ENCODE measurements at regions of chr2 and their contacts with region 1.

Region 1: DNA sequence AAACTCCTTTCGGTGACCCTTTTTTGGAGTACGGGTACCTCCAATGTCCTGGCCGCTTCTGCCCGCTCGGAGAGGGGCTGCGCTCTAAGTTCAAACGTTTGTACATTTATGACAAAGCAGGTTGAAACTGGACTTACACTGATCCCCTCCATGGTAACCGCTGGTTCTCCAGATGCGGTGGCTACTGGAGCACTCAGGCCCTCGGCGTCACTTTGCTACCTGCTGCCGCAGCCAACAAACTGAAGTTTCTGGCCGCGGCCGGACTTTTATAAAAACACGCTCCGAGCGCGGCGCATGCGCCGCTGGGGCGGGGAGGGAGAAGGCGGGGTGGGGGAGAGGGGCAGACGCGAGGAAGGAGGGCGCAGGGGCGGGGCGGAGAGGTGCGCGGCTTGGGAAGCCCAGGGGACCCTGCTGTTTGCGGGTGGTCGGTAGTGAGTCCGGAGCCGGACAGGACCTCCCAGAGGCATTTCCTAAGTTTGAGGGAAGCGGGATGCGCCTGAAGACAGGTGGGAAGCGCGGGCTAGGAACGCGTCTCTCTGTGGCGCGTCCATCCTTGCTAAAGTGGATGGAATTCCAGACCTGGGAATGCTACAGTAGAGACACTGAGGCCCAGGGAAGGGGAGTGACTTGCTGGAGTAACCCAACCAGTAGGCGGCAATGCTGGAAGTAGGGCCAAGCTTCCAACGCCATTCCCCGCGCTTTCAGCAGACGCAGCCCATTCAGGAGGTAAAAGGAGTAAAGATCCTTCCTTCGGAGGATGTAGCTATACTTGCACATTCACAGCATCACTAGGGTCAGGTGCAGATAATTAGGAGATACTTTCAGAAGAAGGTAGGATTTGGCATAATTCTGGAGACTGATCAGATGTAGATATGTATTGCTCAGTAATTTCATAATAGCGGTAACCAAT is at the start of gene CXCR4:
- DNase-seq: peak; percentile 92 to 99 (median 94)
- ATAC-seq: peak; percentile 35
- H3K4me3 ChIP-seq: peak within 1 kb of the TSS; percentile 77 to 83
- H3K4me3 Mint-ChIP-seq: peak within 1 kb of the TSS; percentile 97
- H3K27ac ChIP-seq: peak within 1 kb of the TSS; percentile 87 to 100
- H3K27ac Mint-ChIP-seq: peak within 1 kb of the TSS; percentile 100
- H3K4me1 ChIP-seq: peaks cover 60% of the 10 kb centered on the region
- H3K4me1 Mint-ChIP-seq: peaks cover 64% of the 10 kb centered on the region
- H3K27me3 ChIP-seq: no peaks in the 10 kb centered on the region
- H3K27me3 Mint-ChIP-seq: no peaks in the 10 kb centered on the region
- CTCF ChIP-seq: no peak
- total RNA-seq, gene CXCR4: 2,159 to 2,188 TPM

Region 2: GRCh38 chr2:135876066-135876711 is 242.0 kb before region 1 on chr2 and contains the start of gene MCM6:
- CTCF ChIA-PET with region 1: no interaction called
- POLR2A ChIA-PET with region 1: interaction called, 3 read pairs
- intact Hi-C with region 1: loop called in 1 of 2 experiments (anchors 2 kb)
- DNase-seq: peak; percentile 95 to 99 (median 97)
- ATAC-seq: peak; percentile 89
- H3K4me3 ChIP-seq: peak within 1 kb of the TSS; percentile 81 to 82
- H3K4me3 Mint-ChIP-seq: peak within 1 kb of the TSS; percentile 92
- H3K27ac ChIP-seq: peak within 1 kb of the TSS; percentile 85 to 96
- H3K27ac Mint-ChIP-seq: peak within 1 kb of the TSS; percentile 97
- H3K4me1 ChIP-seq: peaks cover 18% of the 10 kb centered on the region
- H3K4me1 Mint-ChIP-seq: peaks cover 37% of the 10 kb centered on the region
- H3K27me3 ChIP-seq: no peaks in the 10 kb centered on the region
- H3K27me3 Mint-ChIP-seq: no peaks in the 10 kb centered on the region
- CTCF ChIP-seq: no peak
- total RNA-seq, gene MCM6: 37.3 to 38.8 TPM

Region 3: DNA sequence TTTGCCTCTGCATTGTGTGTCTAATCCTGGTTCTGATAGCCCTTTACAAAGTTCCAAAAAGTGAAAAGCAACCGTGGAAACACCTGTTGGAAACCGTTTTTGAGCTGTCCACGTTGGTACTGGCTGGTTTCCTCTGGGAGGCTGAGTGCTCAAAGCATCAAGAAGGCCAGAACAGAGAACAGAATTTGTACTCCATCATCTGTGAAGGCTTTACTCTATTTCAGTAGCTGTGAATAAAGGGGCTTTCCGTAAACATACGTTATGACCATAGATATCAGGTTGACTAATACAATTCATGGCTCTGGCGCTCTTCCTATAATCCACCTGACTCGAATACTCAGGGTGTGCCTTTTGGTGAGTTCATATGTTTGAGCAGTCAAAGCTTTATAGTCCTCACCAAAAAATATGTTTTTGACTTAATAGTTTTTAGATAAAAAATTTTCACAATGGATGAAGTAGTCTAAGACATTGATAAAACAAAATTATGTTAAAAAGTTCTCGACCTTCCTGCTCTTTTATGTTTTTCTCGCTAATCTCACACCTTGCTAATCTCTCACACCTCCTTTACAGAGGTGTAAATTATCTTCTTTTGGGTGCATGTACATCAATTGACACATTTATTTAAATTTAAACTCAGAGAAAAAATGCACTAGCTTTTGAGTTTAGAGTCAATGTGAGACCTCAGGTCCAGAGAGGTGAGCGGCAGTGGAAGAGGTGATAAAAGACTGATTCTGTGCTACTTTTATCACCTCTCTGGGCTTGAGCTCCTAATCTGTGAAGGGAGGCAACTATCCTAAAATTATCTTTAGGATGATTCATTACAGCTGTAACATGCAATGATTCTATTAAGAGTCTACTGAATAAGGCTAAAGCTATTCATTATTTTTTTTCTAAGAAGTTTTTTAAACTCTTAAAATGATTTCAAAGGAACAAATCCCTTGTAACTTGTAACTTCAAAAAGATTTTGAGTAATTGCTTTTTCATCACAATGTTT is 65.5 kb before region 1 on chr2:
- CTCF ChIA-PET with region 1: no interaction called
- POLR2A ChIA-PET with region 1: interaction called, 4 read pairs
- intact Hi-C with region 1: loop called (anchors 5 kb)
- DNase-seq: peak in 2 of 9 experiments; percentile 39 to 60
- ATAC-seq: peak; percentile 22
- H3K4me3 ChIP-seq: no peak overlapping the region
- H3K4me3 Mint-ChIP-seq: peak overlapping the region; percentile 38
- H3K27ac ChIP-seq: peak overlapping the region; percentile 23 to 45
- H3K27ac Mint-ChIP-seq: peak overlapping the region; percentile 86
- H3K4me1 ChIP-seq: peaks cover 88% of the 10 kb centered on the region
- H3K4me1 Mint-ChIP-seq: peaks cover 82% of the 10 kb centered on the region
- H3K27me3 ChIP-seq: no peaks in the 10 kb centered on the region
- H3K27me3 Mint-ChIP-seq: no peaks in the 10 kb centered on the region
- CTCF ChIP-seq: no peak

Region 4: GRCh38 chr2:136129601-136130000 is 11.4 kb after region 1 on chr2:
- CTCF ChIA-PET with region 1: interaction called, 14 read pairs
- POLR2A ChIA-PET with region 1: interaction called, 328 read pairs
- intact Hi-C with region 1: loop called (anchors 1 kb)
- DNase-seq: peak in 6 of 9 experiments; percentile 37 to 94 (median 64)
- ATAC-seq: peak; percentile 34
- H3K4me3 ChIP-seq: peak overlapping the region; percentile 9 to 18
- H3K4me3 Mint-ChIP-seq: peak overlapping the region; percentile 76
- H3K27ac ChIP-seq: peak overlapping the region; percentile 91 to 98
- H3K27ac Mint-ChIP-seq: peak overlapping the region; percentile 100
- H3K4me1 ChIP-seq: peaks cover 90% of the 10 kb centered on the region
- H3K4me1 Mint-ChIP-seq: peaks cover 96% of the 10 kb centered on the region
- H3K27me3 ChIP-seq: no peaks in the 10 kb centered on the region
- H3K27me3 Mint-ChIP-seq: no peaks in the 10 kb centered on the region
- CTCF ChIP-seq: no peak

Region 5: GRCh38 chr2:136238286-136239078 is 120.3 kb after region 1 on chr2:
- CTCF ChIA-PET with region 1: interaction called, 3 read pairs
- POLR2A ChIA-PET with region 1: interaction called, 29 read pairs
- intact Hi-C with region 1: loop called in 1 of 2 experiments (anchors 1 kb)
- DNase-seq: peak; percentile 29 to 89 (median 65)
- ATAC-seq: peak; percentile 75
- H3K4me3 ChIP-seq: peak overlapping the region in 1 of 2 experiments; percentile 13
- H3K4me3 Mint-ChIP-seq: peak overlapping the region; percentile 30
- H3K27ac ChIP-seq: peak overlapping the region; percentile 64 to 83
- H3K27ac Mint-ChIP-seq: peak overlapping the region; percentile 91
- H3K4me1 ChIP-seq: peaks cover 31% of the 10 kb centered on the region
- H3K4me1 Mint-ChIP-seq: peaks cover 56% of the 10 kb centered on the region
- H3K27me3 ChIP-seq: no peaks in the 10 kb centered on the region
- H3K27me3 Mint-ChIP-seq: no peaks in the 10 kb centered on the region
- CTCF ChIP-seq: no peak

Region 6: DNA sequence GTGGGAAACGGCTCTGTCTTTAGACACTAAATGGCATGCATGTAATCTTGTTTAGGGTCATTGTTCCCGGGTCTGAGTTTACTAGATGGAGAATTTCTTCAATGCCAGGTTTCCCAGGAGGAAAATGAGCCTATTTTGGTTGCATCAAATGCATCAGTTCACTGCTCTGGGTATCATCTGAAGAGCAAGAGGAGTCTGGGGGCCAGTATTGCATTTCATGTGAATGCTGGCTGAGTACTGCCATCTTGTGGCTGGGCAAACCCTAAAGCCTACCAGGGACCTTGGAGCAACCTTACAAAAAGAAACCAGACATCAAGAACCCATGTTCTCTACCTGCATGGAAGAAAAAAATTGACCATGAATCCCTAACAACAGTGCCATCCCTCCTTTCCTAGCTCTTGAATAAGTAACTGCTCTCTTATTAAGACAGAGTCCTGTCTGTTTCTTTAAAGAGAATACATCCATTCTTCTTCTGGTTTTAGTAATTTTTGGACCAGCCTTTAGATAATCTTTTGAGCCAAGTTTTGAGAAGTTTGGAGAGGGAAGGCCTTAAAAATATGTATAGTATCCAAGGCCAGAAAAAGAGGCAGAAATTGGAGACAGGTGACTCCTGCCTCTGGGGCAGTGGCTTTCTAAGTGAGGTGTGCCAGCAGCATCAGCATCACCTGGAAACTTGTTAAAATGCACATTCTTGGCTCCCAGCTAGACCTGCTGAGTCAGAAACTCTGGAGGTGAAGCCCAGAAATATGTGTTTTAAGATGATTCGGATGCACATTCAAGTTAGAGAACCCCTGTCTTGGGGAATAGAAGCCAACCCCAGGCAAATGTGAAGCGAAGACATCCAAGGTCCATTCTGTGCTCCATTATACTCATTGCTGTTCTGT is 260.8 kb after region 1 on chr2:
- CTCF ChIA-PET with region 1: interaction called, 5 read pairs
- POLR2A ChIA-PET with region 1: interaction called, 4 read pairs
- intact Hi-C with region 1: loop called in 1 of 2 experiments (anchors 1 kb)
- DNase-seq: peak; percentile 57 to 88 (median 81)
- ATAC-seq: peak; percentile 40
- H3K4me3 ChIP-seq: no peak overlapping the region
- H3K4me3 Mint-ChIP-seq: no peak overlapping the region
- H3K27ac ChIP-seq: no peak overlapping the region
- H3K27ac Mint-ChIP-seq: peak overlapping the region; percentile 72
- H3K4me1 ChIP-seq: peaks cover 46% of the 10 kb centered on the region
- H3K4me1 Mint-ChIP-seq: peaks cover 71% of the 10 kb centered on the region
- H3K27me3 ChIP-seq: no peaks in the 10 kb centered on the region
- H3K27me3 Mint-ChIP-seq: no peaks in the 10 kb centered on the region
- CTCF ChIP-seq: peak; percentile 86

Measured in CD8-positive, alpha-beta T cell (primary cell).